AG04450 (cell line): ENCODE measurements at regions of chr6 and their contacts with region 1.

Region 1: DNA sequence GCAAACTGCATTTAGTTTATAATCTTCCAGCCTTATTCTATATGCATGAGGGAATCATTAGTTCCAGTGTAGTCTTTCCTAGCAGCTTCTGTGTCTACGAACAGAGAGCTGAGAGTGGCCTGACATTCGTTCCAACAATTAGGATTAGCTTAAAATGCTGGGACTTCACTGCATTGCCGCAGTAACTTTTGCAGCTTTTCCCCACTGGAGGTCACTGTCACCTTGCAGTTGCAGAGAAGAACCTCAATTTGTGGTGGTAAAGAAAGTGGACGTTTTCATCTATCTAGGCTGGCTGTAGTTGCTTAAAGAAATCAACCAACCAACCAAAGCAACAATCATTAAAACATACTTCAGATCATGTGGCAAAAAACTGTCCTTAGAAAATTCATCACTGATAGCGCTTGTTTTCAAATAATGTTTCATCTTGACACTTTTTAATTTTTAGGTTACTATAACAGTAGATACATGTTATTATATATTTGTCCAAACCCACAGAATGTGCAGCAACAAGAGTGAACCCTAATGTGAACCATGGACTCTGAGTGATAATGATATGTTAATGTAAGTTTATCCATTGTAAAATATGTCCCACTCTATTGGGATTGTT is 12.2 kb downstream of the MYLK4 start:
- DNase-seq: peak; percentile 45
- H3K4me3 ChIP-seq: no peak overlapping the region
- H3K27ac ChIP-seq: no peak overlapping the region
- H3K27me3 ChIP-seq: no peaks in the 10 kb centered on the region
- CTCF ChIP-seq: peak; percentile 83

Region 2: GRCh38 chr6:2448820-2449571 is 289.5 kb before region 1 on chr6:
- CTCF ChIA-PET with region 1: no interaction called
- POLR2A ChIA-PET with region 1: no interaction called
- DNase-seq: peak; percentile 63
- H3K4me3 ChIP-seq: peak overlapping the region; percentile 41
- H3K27ac ChIP-seq: no peak overlapping the region
- H3K27me3 ChIP-seq: peaks cover 11% of the 10 kb centered on the region
- CTCF ChIP-seq: peak; percentile 83

Region 3: GRCh38 chr6:2725999-2726567 is 12.4 kb before region 1 on chr6:
- CTCF ChIA-PET with region 1: interaction called, 12 read pairs
- POLR2A ChIA-PET with region 1: no interaction called
- DNase-seq: no peak
- H3K4me3 ChIP-seq: no peak overlapping the region
- H3K27ac ChIP-seq: peak overlapping the region; percentile 11
- H3K27me3 ChIP-seq: no peaks in the 10 kb centered on the region
- CTCF ChIP-seq: no peak

Region 4: GRCh38 chr6:2931970-2932748 is 193.7 kb after region 1 on chr6:
- CTCF ChIA-PET with region 1: interaction called, 36 read pairs
- POLR2A ChIA-PET with region 1: no interaction called
- DNase-seq: peak; percentile 4
- H3K4me3 ChIP-seq: no peak overlapping the region
- H3K27ac ChIP-seq: no peak overlapping the region
- H3K27me3 ChIP-seq: peaks cover 7% of the 10 kb centered on the region
- CTCF ChIP-seq: peak; percentile 99